CD14-positive monocyte (primary cell): ENCODE measurements at regions of chr5 and their contacts with region 1.

Region 1: DNA sequence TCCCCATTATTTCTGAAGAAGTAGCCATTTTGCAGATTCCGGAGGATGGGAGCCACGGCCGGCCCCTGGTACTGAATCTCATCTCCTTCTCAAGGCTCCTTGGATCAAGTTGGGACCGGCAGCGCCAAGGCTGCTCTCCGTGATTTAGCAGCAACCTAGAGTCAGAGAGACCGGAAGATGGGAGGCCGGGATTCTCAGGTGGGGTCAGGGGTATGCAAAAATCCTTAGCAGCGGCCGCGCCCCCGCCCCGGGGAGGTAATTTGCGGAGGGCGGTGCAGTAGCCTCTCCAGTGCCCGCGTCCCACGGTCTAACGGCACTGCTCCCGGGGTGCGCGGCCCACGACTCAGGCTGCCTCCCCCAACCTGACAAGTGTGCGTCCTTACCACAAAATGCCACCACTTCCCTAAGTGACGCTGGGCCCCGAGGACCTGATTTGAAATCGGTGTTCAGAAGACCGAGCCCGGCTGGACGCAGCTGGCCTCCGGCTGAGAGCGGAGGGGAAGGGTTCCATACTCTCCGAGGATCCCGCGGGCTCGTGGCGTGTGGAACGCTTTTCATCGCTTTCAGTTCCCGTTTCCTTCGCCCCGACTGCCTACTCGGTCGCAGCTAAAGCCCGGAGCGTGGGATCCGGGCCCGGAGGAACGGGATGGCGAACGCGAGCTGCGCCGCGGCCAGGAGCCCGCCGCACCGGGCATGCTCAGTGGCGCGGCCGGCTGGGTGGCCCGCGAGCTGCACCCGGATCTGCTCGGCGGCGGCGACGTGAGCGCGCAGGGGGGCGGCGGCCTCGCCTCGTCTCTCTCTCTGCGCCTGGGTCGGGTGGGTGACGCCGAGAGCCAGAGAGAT is at the start of gene SCAMP1:
- DNase-seq: peak; percentile 94 to 97 (median 94)
- H3K4me3 ChIP-seq: peak within 1 kb of the TSS; percentile 85 to 97 (median 92)
- H3K4me3 Mint-ChIP-seq: peak within 1 kb of the TSS; percentile 96
- H3K27ac ChIP-seq: peak within 1 kb of the TSS; percentile 77 to 96
- H3K27ac Mint-ChIP-seq: peak within 1 kb of the TSS; percentile 91 to 97 (median 96)
- H3K4me1 ChIP-seq: peaks cover 16 to 32% of the 10 kb centered on the region in 2 donors
- H3K4me1 Mint-ChIP-seq: peaks cover 42% of the 10 kb centered on the region
- H3K27me3 ChIP-seq: no peaks in the 10 kb centered on the region
- H3K27me3 Mint-ChIP-seq: peaks cover 0 to 2% (median 0%) of the 10 kb centered on the region in 3 donors
- CTCF ChIP-seq: no peak
- polyA plus RNA-seq, gene SCAMP1: 5.4 to 52.4 (median 47.8) TPM

Region 2: GRCh38 chr5:78294248-78295034 is 65.6 kb before region 1 on chr5 and contains the start of gene AP3B1:
- intact Hi-C with region 1: loop called (anchors 2 kb)
- DNase-seq: peak; percentile 99 to 100 (median 99)
- H3K4me3 ChIP-seq: peak within 1 kb of the TSS; percentile 90 to 97 (median 94)
- H3K4me3 Mint-ChIP-seq: peak within 1 kb of the TSS; percentile 95 to 99
- H3K27ac ChIP-seq: peak within 1 kb of the TSS; percentile 90 to 98
- H3K27ac Mint-ChIP-seq: peak within 1 kb of the TSS; percentile 98 to 100 (median 99)
- H3K4me1 ChIP-seq: peaks cover 39 to 57% of the 10 kb centered on the region in 2 donors
- H3K4me1 Mint-ChIP-seq: peaks cover 45% of the 10 kb centered on the region
- H3K27me3 ChIP-seq: peaks cover 0 to 6% of the 10 kb centered on the region in 2 donors
- H3K27me3 Mint-ChIP-seq: peaks cover 5 to 7% (median 6%) of the 10 kb centered on the region in 3 donors
- CTCF ChIP-seq: no peak
- polyA plus RNA-seq, gene AP3B1: 20.3 to 39.8 (median 24.9) TPM